HEK293T (cell line): ENCODE measurements at regions of chr6 and their contacts with region 1.

Region 1: DNA sequence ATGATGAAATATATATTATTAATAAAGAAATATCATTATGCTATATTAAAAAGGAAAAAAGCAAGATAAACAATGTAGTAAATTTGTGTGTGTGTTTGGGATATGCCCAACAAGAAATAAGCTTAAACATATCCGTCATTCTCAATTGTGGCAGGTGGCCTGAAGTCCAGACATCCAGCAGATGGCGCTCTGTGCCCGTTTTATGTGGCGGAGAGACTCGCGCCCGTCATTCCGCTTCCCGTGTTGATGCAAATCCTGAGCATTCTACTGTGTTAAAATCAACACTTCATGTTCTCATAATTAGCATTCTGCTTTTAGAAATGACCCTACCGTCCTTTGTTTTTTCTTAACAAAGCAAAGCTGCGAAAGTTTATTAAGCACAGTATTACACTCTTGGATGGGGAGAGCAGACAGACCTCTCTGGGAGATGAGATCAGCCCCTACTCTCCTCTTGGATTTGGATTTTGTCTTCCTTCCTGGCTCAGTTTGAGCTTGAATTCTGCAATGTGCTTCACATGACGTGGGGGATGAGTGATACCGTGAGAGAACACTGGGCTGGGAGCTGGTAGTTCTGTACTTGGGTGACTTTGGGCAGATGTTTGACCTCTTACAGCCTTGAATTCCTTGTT is 125.8 kb downstream of the MCHR2 start:
- DNase-seq: peak; percentile 74

Region 2: DNA sequence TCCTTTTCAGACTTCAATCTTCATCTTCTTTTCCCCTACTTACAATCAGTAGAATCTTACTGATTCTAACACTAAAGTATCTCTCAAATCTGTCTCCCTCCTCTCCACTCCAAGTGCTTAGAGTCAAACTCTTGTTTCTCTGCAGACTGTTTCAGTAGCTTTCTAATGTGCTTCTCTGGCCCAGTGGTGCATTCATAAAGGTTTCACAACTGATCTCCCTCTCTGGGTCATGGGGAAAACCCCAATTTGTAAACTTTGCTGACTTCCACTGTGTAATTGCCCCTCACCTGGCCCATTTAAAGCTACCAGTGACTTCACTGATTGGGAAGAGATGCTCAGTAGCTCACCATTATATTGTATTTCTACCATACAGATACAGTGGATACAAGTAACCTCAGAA is 702.4 kb before region 1 on chr6:
- CTCF ChIA-PET with region 1: no interaction called
- POLR2A ChIA-PET with region 1: no interaction called
- DNase-seq: no peak

Region 3: DNA sequence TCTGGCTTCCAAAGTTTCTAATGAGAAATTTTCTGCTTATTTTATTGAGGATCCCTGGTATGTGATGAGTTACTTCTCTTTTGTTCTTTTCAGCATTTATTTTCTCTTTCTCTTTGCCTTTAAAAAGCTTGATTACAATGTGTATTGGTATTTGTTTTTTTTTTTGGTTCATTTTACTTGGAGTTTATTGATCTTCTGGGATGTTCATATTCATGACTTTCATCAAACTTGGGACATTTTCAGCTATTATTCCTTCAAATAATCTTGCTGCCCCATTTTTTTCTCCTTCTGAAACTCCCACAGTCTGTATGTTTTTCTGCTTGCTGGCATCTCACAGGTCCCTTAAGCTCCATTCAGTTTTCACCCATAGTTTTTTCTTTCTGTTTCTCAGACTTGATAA is 159.1 kb before region 1 on chr6:
- CTCF ChIA-PET with region 1: no interaction called
- POLR2A ChIA-PET with region 1: no interaction called
- DNase-seq: no peak

Region 4: GRCh38 chr6:99810942-99811620 is 57.1 kb before region 1 on chr6:
- CTCF ChIA-PET with region 1: no interaction called
- POLR2A ChIA-PET with region 1: no interaction called
- DNase-seq: no peak

Region 5: GRCh38 chr6:99905209-99906106 is 37.3 kb after region 1 on chr6:
- CTCF ChIA-PET with region 1: interaction called, 29 read pairs
- POLR2A ChIA-PET with region 1: no interaction called
- DNase-seq: peak; percentile 63

Region 6: GRCh38 chr6:100099189-100100074 is 231.2 kb after region 1 on chr6:
- CTCF ChIA-PET with region 1: interaction called, 55 read pairs
- POLR2A ChIA-PET with region 1: no interaction called
- DNase-seq: no peak

Region 7: GRCh38 chr6:100105138-100105753 is 237.1 kb after region 1 on chr6:
- CTCF ChIA-PET with region 1: interaction called, 55 read pairs
- POLR2A ChIA-PET with region 1: no interaction called
- DNase-seq: no peak